GM10248 (cell line): ENCODE measurements at regions of chr1 and their contacts with region 1.

Region 1: GRCh38 chr1:197356723-197357533 is 88.9 kb downstream of the CRB1 start:
- DNase-seq: peak; percentile 26
- CTCF ChIP-seq: peak; percentile 62

Region 2: GRCh38 chr1:197017558-197018146 is 339.3 kb before region 1 on chr1:
- CTCF ChIA-PET with region 1: no interaction called
- POLR2A ChIA-PET with region 1: no interaction called
- DNase-seq: no peak
- CTCF ChIP-seq: no peak

Region 3: GRCh38 chr1:197343663-197344273 is 13.2 kb before region 1 on chr1:
- CTCF ChIA-PET with region 1: interaction called, 10 read pairs
- POLR2A ChIA-PET with region 1: no interaction called
- DNase-seq: no peak
- CTCF ChIP-seq: no peak

Region 4: GRCh38 chr1:197367627-197368026 is 10.7 kb after region 1 on chr1:
- CTCF ChIA-PET with region 1: interaction called, 13 read pairs
- POLR2A ChIA-PET with region 1: no interaction called
- DNase-seq: no peak
- CTCF ChIP-seq: no peak